ENCODE measurements at regions of chr15 and their contacts with region 1.

Region 1: GRCh38 chr15:81950841-81951414 is 94.9 kb downstream of the MEX3B start:
- DNase-seq: no peak
- ATAC-seq: no peak
- H3K4me3 ChIP-seq: no peak overlapping the region
- H3K27ac ChIP-seq: no peak overlapping the region
- H3K4me1 ChIP-seq: peaks cover 0 to 9% (median 0%) of the 10 kb centered on the region in 9 donors
- H3K27me3 ChIP-seq: no peaks in the 10 kb centered on the region
- CTCF ChIP-seq: no peak

Region 2: GRCh38 chr15:81843226-81843625 is 107.7 kb before region 1 on chr15:
- intact Hi-C with region 1: loop called in 1 of 10 experiments (anchors 10 kb)
- DNase-seq: no peak
- ATAC-seq: no peak
- H3K4me3 ChIP-seq: no peak overlapping the region
- H3K27ac ChIP-seq: no peak overlapping the region
- H3K4me1 ChIP-seq: no peaks in the 10 kb centered on the region
- H3K27me3 ChIP-seq: no peaks in the 10 kb centered on the region
- CTCF ChIP-seq: no peak

Region 3: DNA sequence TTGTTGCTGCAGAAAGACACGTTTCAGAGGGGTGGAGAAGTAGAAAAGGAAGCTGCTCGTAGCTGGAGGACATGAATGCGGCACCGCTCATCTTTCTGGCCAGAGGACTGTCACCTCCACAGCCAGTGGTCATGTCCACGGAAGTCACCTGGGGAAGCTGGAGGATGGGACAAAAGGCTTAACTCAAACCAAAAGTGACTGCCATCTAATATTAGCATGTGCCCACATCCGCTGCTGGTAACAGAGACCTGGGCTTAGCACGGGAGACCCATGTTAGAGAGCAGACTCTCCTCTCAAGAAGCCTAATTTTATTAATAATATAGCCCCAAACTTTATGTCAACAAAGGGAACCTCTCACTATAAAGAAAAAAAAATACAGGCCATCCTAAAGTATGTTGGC is 88.9 kb after region 1 on chr15:
- intact Hi-C with region 1: loop called in 2 of 10 experiments (anchors 10 kb)
- DNase-seq: no peak
- ATAC-seq: no peak
- H3K4me3 ChIP-seq: no peak overlapping the region
- H3K27ac ChIP-seq: peak overlapping the region in 1 of 10 donors; percentile 6
- H3K4me1 ChIP-seq: peaks cover 3 to 34% (median 25%) of the 10 kb centered on the region in 9 donors
- H3K27me3 ChIP-seq: peaks cover 0 to 12% (median 0%) of the 10 kb centered on the region in 7 donors
- CTCF ChIP-seq: no peak